Dorsolateral prefrontal cortex (tissue), 120 donors: ENCODE measurements at regions of chr12 and their contacts with region 1.

Region 1: GRCh38 chr12:5171701-5172100 is 128.0 kb downstream of the KCNA5 start:
- DNase-seq: peak in 1 of 10 donors; percentile 55
- H3K4me3 ChIP-seq: no peak overlapping the region
- H3K27ac ChIP-seq: no peak overlapping the region
- H3K27me3 ChIP-seq: peaks cover 0 to 38% (median 4%) of the 10 kb centered on the region in 45 donors
- CTCF ChIP-seq: peak in 54 of 56 donors; percentile 26 to 66 (median 52)

Region 2: GRCh38 chr12:5220835-5221234 is 49.1 kb after region 1 on chr12:
- intact Hi-C with region 1: no loop called
- DNase-seq: no peak
- H3K4me3 ChIP-seq: no peak overlapping the region
- H3K27ac ChIP-seq: no peak overlapping the region
- H3K27me3 ChIP-seq: peaks cover 0 to 5% (median 0%) of the 10 kb centered on the region in 45 donors
- CTCF ChIP-seq: no peak

Region 3: GRCh38 chr12:5442251-5443006 is 270.7 kb after region 1 on chr12:
- intact Hi-C with region 1: loop called in 1 of 2 experiments (anchors 10 kb)
- DNase-seq: peak in 2 of 10 donors; percentile 19 to 47
- H3K4me3 ChIP-seq: no peak overlapping the region
- H3K27ac ChIP-seq: no peak overlapping the region
- H3K27me3 ChIP-seq: peaks cover 0 to 79% (median 15%) of the 10 kb centered on the region in 45 donors
- CTCF ChIP-seq: peak in 55 of 56 donors; percentile 14 to 73 (median 51)